MCF 10A (cell line): ENCODE measurements at regions of chr12 and their contacts with region 1.

Region 1: GRCh38 chr12:47686645-47687240 is 19.1 kb downstream of the RPAP3 start:
- DNase-seq: peak; percentile 44
- H3K4me3 Mint-ChIP-seq: no peak overlapping the region
- H3K27ac Mint-ChIP-seq: no peak overlapping the region
- H3K4me1 Mint-ChIP-seq: no peaks in the 10 kb centered on the region
- H3K27me3 Mint-ChIP-seq: no peaks in the 10 kb centered on the region
- CTCF ChIP-seq: peak; percentile 52

Region 2: GRCh38 chr12:47307680-47308399 is 378.9 kb before region 1 on chr12:
- CTCF ChIA-PET with region 1: no interaction called
- POLR2A ChIA-PET with region 1: no interaction called
- intact Hi-C with region 1: loop called (anchors 2 kb)
- DNase-seq: peak; percentile 75
- H3K4me3 Mint-ChIP-seq: no peak overlapping the region
- H3K27ac Mint-ChIP-seq: no peak overlapping the region
- H3K4me1 Mint-ChIP-seq: peaks cover 11% of the 10 kb centered on the region
- H3K27me3 Mint-ChIP-seq: no peaks in the 10 kb centered on the region
- CTCF ChIP-seq: peak; percentile 73

Region 3: DNA sequence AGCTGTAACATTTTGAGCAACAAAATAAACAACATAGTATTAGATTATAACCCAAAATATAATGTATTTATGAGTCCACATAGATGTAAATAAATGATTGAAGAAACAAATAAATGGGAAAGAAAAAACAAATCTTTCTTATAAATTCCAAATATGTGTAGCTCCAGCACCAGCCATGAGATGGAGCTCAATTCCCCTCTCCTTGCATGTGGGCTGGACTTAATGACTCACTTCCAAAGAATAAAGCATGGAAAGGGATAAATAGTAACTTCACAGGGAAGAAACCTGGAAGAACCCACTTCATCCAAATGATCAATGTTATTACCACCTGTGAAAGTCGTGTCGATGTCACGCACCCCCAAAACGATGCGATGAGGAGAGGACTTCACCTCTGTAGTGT is 139.7 kb before region 1 on chr12:
- CTCF ChIA-PET with region 1: interaction called, 4 read pairs
- POLR2A ChIA-PET with region 1: interaction called, 3 read pairs
- intact Hi-C with region 1: loop called (anchors 1 kb)
- DNase-seq: peak; percentile 52
- H3K4me3 Mint-ChIP-seq: no peak overlapping the region
- H3K27ac Mint-ChIP-seq: no peak overlapping the region
- H3K4me1 Mint-ChIP-seq: no peaks in the 10 kb centered on the region
- H3K27me3 Mint-ChIP-seq: peaks cover 11% of the 10 kb centered on the region
- CTCF ChIP-seq: no peak